Naive thymus-derived CD4-positive, alpha-beta T cell (primary cell): ENCODE measurements at regions of chr2 and their contacts with region 1.

Region 1: GRCh38 chr2:181239201-181239799 is 217.9 kb upstream of the ITGA4 start:
- DNase-seq: peak in 3 of 9 donors; percentile 13 to 37 (median 20)
- ATAC-seq: no peak
- H3K4me3 ChIP-seq: no peak overlapping the region
- H3K4me3 Mint-ChIP-seq: peak overlapping the region in 1 of 10 donors; percentile 58
- H3K27ac ChIP-seq: no peak overlapping the region
- H3K27ac Mint-ChIP-seq: peak overlapping the region in 5 of 9 donors; percentile 4 to 66 (median 45)
- H3K4me1 ChIP-seq: peaks cover 9 to 14% of the 10 kb centered on the region in 2 donors
- H3K4me1 Mint-ChIP-seq: peaks cover 18 to 61% (median 58%) of the 10 kb centered on the region in 7 donors
- H3K27me3 ChIP-seq: no peaks in the 10 kb centered on the region
- H3K27me3 Mint-ChIP-seq: no peaks in the 10 kb centered on the region

Region 2: GRCh38 chr2:179796213-179797007 is 1442.9 kb before region 1 on chr2:
- CTCF ChIA-PET with region 1: no interaction called
- POLR2A ChIA-PET with region 1: no interaction called
- intact Hi-C with region 1: no loop called
- DNase-seq: no peak
- ATAC-seq: no peak
- H3K4me3 ChIP-seq: no peak overlapping the region
- H3K4me3 Mint-ChIP-seq: no peak overlapping the region
- H3K27ac ChIP-seq: no peak overlapping the region
- H3K27ac Mint-ChIP-seq: no peak overlapping the region
- H3K4me1 ChIP-seq: no peaks in the 10 kb centered on the region
- H3K4me1 Mint-ChIP-seq: no peaks in the 10 kb centered on the region
- H3K27me3 ChIP-seq: no peaks in the 10 kb centered on the region
- H3K27me3 Mint-ChIP-seq: peaks cover 0 to 7% (median 4%) of the 10 kb centered on the region in 5 donors

Region 3: DNA sequence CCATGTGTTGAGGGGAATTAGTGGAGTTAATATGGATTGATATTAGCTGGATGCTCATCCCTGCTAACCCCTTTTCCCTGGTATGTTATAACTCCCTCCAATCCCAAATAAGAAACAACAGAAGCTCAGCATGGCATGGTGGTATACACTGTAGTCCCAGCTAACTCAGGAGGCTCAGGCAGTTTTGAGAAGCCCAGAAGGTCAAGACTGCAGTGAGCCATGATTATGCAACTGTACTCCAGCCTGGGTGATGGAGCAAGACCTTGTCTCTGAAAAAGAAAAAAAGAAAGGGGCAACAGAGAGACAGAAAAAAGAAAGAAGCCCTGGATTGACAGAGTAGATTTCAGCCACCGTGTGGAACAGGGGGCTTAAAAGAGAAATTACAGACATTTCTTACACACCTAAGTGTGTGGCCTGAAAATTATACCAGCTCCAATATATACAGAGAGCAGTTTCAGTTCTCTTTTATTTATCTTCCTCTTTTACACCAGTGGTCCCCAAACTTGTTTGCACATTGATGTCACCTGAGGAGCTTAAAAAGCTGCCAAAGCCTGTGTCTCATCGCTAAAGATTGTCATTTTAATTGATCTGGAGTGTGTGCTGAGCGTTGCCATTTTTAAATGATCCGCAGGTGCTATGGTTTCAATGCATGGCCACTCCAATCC is 55.3 kb before region 1 on chr2:
- CTCF ChIA-PET with region 1: no interaction called
- POLR2A ChIA-PET with region 1: no interaction called
- intact Hi-C with region 1: no loop called
- DNase-seq: no peak
- ATAC-seq: peak; percentile 55
- H3K4me3 ChIP-seq: no peak overlapping the region
- H3K4me3 Mint-ChIP-seq: no peak overlapping the region
- H3K27ac ChIP-seq: no peak overlapping the region
- H3K27ac Mint-ChIP-seq: peak overlapping the region in 1 of 9 donors; percentile 41
- H3K4me1 ChIP-seq: peaks cover 9% of the 10 kb centered on the region in 2 donors
- H3K4me1 Mint-ChIP-seq: peaks cover 12 to 45% (median 27%) of the 10 kb centered on the region in 7 donors
- H3K27me3 ChIP-seq: no peaks in the 10 kb centered on the region
- H3K27me3 Mint-ChIP-seq: no peaks in the 10 kb centered on the region

Region 4: GRCh38 chr2:181258720-181259119 is 19.4 kb after region 1 on chr2:
- CTCF ChIA-PET with region 1: interaction called, 4 read pairs
- POLR2A ChIA-PET with region 1: interaction called, 3 read pairs
- intact Hi-C with region 1: loop called in 1 of 2 experiments (anchors 2 kb)
- DNase-seq: no peak
- ATAC-seq: no peak
- H3K4me3 ChIP-seq: no peak overlapping the region
- H3K4me3 Mint-ChIP-seq: no peak overlapping the region
- H3K27ac ChIP-seq: no peak overlapping the region
- H3K27ac Mint-ChIP-seq: no peak overlapping the region
- H3K4me1 ChIP-seq: peaks cover 3 to 4% of the 10 kb centered on the region in 2 donors
- H3K4me1 Mint-ChIP-seq: peaks cover 2 to 46% (median 29%) of the 10 kb centered on the region in 7 donors
- H3K27me3 ChIP-seq: no peaks in the 10 kb centered on the region
- H3K27me3 Mint-ChIP-seq: no peaks in the 10 kb centered on the region

Region 5: DNA sequence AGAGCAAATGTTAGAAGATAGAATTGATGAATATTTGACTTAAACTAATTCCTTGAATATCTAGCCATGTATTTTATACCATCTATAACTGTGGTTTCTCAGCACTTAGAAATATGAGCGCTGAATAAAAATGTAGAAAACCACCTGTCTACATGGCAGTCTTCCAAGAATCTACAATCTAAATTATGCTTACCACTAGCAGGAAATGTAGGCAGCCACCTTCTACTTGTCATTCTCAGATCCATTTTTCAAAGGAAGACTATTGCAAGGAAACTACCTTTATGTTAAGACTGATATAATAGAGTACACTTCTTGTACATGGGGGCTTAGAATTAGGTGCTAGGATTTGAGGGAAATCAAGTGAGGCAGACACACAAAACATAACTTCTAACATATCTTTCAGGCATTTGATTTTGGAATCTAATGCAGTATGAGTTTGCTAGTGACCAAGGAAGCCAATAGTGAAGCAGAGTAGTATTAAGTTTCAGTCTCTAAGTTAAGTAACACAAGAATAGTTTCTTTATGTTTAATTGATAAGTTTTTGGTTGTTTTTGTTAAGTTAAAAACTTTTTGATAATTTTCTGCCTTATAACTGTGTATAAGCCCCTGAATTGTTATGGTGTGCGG is 42.0 kb after region 1 on chr2:
- CTCF ChIA-PET with region 1: no interaction called
- POLR2A ChIA-PET with region 1: no interaction called
- intact Hi-C with region 1: loop called in 1 of 2 experiments (anchors 5 kb)
- DNase-seq: peak in 7 of 9 donors; percentile 47 to 84 (median 70)
- ATAC-seq: peak; percentile 92
- H3K4me3 ChIP-seq: no peak overlapping the region
- H3K4me3 Mint-ChIP-seq: peak overlapping the region in 9 of 10 donors; percentile 10 to 74 (median 62)
- H3K27ac ChIP-seq: peak overlapping the region; percentile 17
- H3K27ac Mint-ChIP-seq: peak overlapping the region; percentile 75 to 95 (median 84)
- H3K4me1 ChIP-seq: peaks cover 18 to 31% of the 10 kb centered on the region in 2 donors
- H3K4me1 Mint-ChIP-seq: peaks cover 24 to 69% (median 58%) of the 10 kb centered on the region in 7 donors
- H3K27me3 ChIP-seq: no peaks in the 10 kb centered on the region
- H3K27me3 Mint-ChIP-seq: no peaks in the 10 kb centered on the region